Sciatic nerve (tissue), 2 donors: ENCODE measurements at regions of chr11 and their contacts with region 1.

Region 1: GRCh38 chr11:75380711-75381420 is 18.5 kb upstream of the RPS3 start:
- DNase-seq: no peak
- ATAC-seq: no peak

Region 2: GRCh38 chr11:75281469-75282095 is 99.3 kb before region 1 on chr11:
- intact Hi-C with region 1: loop called (anchors 2 kb)
- DNase-seq: peak; percentile 49
- ATAC-seq: no peak

Region 3: DNA sequence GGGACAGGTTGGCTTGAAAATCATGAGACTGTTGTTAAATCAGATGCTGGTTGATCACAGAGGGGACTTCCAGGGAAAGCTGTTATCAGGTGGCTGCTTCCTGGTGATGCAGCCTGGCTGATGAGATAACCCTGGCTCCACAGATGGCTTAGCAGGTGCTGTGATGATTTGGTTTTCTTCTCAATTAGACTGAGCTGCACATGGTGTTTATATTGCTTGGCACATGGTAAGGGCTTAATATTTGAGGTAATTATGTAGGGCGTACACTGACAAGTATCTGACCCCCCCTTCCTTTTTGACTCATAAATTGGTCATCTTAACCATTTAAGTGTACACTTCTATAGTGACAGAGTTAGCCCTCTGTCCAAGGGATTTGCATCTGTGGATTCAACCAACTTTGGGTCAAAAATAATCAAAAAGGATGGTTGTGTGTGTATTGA is 25.5 kb after region 1 on chr11:
- intact Hi-C with region 1: no loop called
- DNase-seq: no peak
- ATAC-seq: no peak